Activated CD8-positive, alpha-beta memory T cell treated with anti-CD3 and anti-CD28 coated beads, Interleukin-2, amount 10 ng/mL, durations not matched to agents 7 days and 5 days (primary cell): ENCODE measurements at regions of chr6 and their contacts with region 1.

Region 1: GRCh38 chr6:30541515-30542403 is 14.5 kb downstream of the GNL1 start:
- DNase-seq: peak; percentile 89
- ATAC-seq: peak; percentile 89
- H3K4me3 Mint-ChIP-seq: peak overlapping the region; percentile 76
- H3K27ac Mint-ChIP-seq: peak overlapping the region; percentile 87
- H3K4me1 Mint-ChIP-seq: peaks cover 32% of the 10 kb centered on the region
- H3K27me3 Mint-ChIP-seq: no peaks in the 10 kb centered on the region

Region 2: GRCh38 chr6:30311101-30311500 is 230.7 kb before region 1 on chr6:
- CTCF ChIA-PET with region 1: no interaction called
- DNase-seq: no peak
- ATAC-seq: no peak
- H3K4me3 Mint-ChIP-seq: no peak overlapping the region
- H3K27ac Mint-ChIP-seq: no peak overlapping the region
- H3K4me1 Mint-ChIP-seq: peaks cover 2% of the 10 kb centered on the region
- H3K27me3 Mint-ChIP-seq: no peaks in the 10 kb centered on the region

Region 3: DNA sequence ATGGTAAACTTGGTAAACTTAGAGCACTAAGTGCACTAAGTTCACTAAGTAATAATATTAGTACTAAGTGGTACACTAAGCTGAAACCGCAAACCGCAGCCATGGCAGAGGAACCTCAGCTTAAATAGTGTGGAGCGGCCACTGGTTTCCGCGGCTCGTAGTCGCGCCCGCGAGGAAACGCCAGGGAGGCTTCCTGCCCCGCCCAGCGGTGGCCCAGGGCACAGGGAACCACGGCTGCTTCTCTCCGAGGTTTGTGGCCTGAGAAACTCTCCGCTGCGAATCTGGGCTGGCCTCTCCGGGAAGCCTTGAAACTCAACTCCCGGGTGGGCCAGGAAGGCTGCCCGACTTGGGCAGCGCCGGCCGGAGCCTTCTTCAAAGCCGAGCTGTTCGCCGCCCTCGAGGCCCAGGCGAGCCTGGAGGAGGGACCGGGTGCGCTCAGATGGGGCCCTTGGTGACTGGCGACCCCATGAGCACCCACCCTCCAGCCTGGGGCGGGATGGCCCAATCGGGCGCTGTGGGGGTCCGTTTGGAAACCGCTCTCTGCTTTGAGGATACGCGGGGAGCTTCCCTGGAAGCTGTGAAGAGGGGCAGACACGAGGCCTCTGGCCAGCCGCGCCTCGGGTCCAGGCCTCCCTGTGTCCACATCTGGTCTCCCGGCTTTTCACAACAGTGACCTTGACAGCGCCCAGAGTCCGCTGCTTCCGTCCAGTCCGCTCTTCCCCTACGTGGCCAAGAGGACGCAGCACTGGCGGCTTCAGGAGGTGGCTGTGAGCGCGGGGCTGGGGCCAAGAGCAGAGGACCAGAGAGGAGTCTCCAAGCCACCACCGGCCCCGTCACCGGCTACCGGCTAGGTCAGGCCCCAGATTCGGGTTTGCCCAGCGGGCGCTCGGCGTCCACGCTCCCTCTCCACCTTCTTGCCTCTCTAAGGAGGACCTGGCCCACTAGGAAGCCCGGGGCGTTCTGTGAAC is 77.8 kb before region 1 on chr6:
- CTCF ChIA-PET with region 1: interaction called, 44 read pairs
- DNase-seq: peak; percentile 87
- ATAC-seq: peak; percentile 72
- H3K4me3 Mint-ChIP-seq: no peak overlapping the region
- H3K27ac Mint-ChIP-seq: no peak overlapping the region
- H3K4me1 Mint-ChIP-seq: peaks cover 35% of the 10 kb centered on the region
- H3K27me3 Mint-ChIP-seq: peaks cover 90% of the 10 kb centered on the region

Region 4: GRCh38 chr6:30508890-30509736 is 32.6 kb before region 1 on chr6:
- CTCF ChIA-PET with region 1: interaction called, 16 read pairs
- DNase-seq: no peak
- ATAC-seq: peak; percentile 76
- H3K4me3 Mint-ChIP-seq: peak overlapping the region; percentile 48
- H3K27ac Mint-ChIP-seq: peak overlapping the region; percentile 90
- H3K4me1 Mint-ChIP-seq: peaks cover 46% of the 10 kb centered on the region
- H3K27me3 Mint-ChIP-seq: no peaks in the 10 kb centered on the region

Region 5: DNA sequence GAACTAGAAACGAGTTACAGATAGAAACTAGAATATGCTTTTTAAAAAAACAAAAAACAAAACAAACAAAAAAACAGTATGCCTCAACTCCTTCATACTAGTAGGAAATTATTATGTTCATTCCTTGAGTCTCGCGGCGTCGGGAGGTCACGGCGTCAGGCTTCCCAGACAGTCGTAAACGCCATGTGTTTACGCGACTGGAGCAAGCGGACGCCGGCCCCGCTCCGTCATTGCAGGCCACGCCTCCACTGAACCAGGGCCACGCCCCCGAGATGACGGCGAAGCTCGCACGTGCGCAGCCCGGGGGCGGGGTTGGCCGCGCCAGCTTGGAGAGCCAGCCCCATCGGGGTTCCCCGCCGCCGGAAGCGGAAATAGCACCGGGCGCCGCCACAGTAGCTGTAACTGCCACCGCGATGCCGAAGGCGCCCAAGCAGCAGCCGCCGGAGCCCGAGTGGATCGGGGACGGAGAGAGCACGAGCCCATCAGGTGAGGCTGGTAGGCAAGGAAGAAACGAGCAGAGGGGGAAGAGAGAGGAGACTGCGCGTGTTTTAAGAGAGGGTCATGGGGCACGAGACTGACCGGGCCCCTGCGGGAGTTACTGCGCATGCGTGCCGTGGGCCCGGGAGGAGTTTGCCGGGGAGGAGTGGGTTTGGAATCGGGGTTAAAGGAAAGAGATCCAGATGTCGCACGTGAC is 29.5 kb after region 1 on chr6 and contains the start of gene ABCF1:
- CTCF ChIA-PET with region 1: interaction called, 43 read pairs
- DNase-seq: peak; percentile 99
- ATAC-seq: peak; percentile 95
- H3K4me3 Mint-ChIP-seq: peak within 1 kb of the TSS; percentile 89
- H3K27ac Mint-ChIP-seq: peak within 1 kb of the TSS; percentile 94
- H3K4me1 Mint-ChIP-seq: peaks cover 58% of the 10 kb centered on the region
- H3K27me3 Mint-ChIP-seq: no peaks in the 10 kb centered on the region
- total RNA-seq, gene ABCF1: 73.8 to 98.6 TPM

Region 6: GRCh38 chr6:30635834-30636233 is 94.1 kb after region 1 on chr6:
- CTCF ChIA-PET with region 1: no interaction called
- DNase-seq: no peak
- ATAC-seq: no peak
- H3K4me3 Mint-ChIP-seq: no peak overlapping the region
- H3K27ac Mint-ChIP-seq: no peak overlapping the region
- H3K4me1 Mint-ChIP-seq: peaks cover 7% of the 10 kb centered on the region
- H3K27me3 Mint-ChIP-seq: no peaks in the 10 kb centered on the region

Region 7: DNA sequence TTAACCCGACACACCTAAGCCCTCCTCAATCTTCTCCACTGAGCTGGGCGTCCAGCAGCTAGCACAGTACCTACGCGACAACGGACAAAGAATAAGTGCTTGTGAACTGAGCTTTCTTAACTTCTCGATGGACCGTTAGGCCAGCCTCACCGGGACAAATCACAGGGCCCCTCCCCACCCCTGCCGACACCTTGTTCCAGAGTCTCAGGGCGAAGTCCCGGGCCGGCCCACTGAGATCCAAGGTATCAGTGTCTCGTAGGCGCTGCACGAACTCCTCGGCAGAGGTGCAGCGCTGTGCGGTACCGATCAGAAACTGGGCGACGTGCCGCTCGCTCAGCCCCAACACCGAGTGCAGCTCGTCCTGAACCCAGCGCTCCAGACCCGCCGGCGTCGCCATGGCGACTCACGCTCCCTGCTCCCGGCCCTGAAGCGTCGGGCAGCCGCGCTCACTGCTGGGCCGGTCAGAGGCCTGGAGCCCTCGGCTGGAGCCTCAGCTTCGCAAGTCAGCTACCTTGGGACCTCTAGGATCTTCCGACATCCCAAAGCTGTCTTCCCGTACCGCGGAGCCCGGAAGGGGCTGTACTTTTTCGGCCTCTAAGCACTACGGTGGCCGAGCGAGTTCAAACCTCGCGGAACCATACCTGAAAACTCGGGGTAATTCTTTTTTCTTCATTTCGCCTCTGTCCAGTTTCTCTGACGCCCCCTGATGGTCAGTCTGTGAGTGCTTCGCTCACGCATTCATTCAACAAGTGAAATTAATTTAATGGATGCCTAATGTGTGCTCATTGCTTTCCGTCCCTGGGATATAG is 130.9 kb after region 1 on chr6 and contains the start of gene DHX16:
- CTCF ChIA-PET with region 1: interaction called, 14 read pairs
- DNase-seq: peak; percentile 95
- ATAC-seq: peak; percentile 85
- H3K4me3 Mint-ChIP-seq: peak within 1 kb of the TSS; percentile 94
- H3K27ac Mint-ChIP-seq: peak within 1 kb of the TSS; percentile 79
- H3K4me1 Mint-ChIP-seq: peaks cover 38% of the 10 kb centered on the region
- H3K27me3 Mint-ChIP-seq: no peaks in the 10 kb centered on the region
- total RNA-seq, gene DHX16: 39.5 to 49.6 TPM